ENCODE measurements at regions of chr19 and their contacts with region 1.

Region 1: DNA sequence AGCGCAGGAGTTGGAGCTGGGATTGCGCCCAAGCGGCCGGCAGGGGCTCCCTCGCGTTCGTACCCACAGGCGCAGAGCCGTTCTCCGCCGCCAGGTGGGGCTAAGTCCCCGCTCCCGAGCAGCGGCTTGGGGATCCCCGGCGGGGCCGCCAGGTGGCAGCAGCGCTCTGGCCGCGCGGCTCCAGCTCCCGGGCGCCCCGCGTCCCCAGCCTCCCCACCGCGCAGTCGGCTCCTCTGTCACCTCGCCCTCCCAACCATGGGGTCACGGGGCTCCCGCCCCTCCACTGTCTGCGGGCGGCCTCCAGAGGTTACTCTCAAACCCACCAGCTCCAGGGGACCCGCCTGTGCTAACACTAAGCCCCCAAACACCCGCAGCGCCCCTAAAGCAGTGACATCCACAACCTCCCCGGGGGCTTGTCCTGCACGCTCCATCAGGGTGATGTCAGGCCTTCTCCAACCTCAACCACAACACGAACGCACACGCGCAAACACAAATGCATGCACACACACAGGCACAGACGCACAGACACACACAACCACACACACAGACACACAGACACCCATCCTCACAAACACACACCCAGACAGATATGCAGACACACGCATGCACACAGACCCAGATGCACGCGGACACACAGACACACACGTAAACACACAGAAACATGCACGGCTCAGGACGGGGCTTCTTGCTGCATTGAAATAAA is 18.4 kb upstream of the KCTD15 start:
- DNase-seq: peak; percentile 85 to 96
- ATAC-seq: peak; percentile 61 to 85
- H3K4me3 ChIP-seq: peak overlapping the region; percentile 42
- H3K27ac ChIP-seq: peak overlapping the region in 1 of 2 experiments; percentile 42; a peak in 2 of 6 replicates
- H3K4me1 ChIP-seq: peaks cover 27% of the 10 kb centered on the region
- CTCF ChIP-seq: peak; percentile 100
- EP300 ChIP-seq: no peak
- POLR2A ChIP-seq: no peak
- RAD21 ChIP-seq: peak; percentile 100

Region 2: GRCh38 chr19:33438007-33438671 is 340.1 kb before region 1 on chr19:
- CTCF ChIA-PET with region 1: interaction called, 572 read pairs
- POLR2A ChIA-PET with region 1: no interaction called
- DNase-seq: peak in 1 of 2 experiments; percentile 48
- ATAC-seq: peak; percentile 27 to 72; a peak in 4 of 6 replicates
- H3K4me3 ChIP-seq: no peak overlapping the region
- H3K27ac ChIP-seq: no peak overlapping the region
- H3K4me1 ChIP-seq: no peaks in the 10 kb centered on the region
- CTCF ChIP-seq: no peak
- EP300 ChIP-seq: no peak
- POLR2A ChIP-seq: no peak
- RAD21 ChIP-seq: peak in 1 of 2 experiments; percentile 37; a peak in 3 of 5 replicates

Region 3: GRCh38 chr19:33804021-33804799 is 26.0 kb after region 1 on chr19:
- CTCF ChIA-PET with region 1: interaction called, 313 read pairs
- POLR2A ChIA-PET with region 1: interaction called, 4 read pairs
- DNase-seq: peak; percentile 96 to 99
- ATAC-seq: peak; percentile 76 to 86
- H3K4me3 ChIP-seq: no peak overlapping the region
- H3K27ac ChIP-seq: peak overlapping the region; percentile 88 to 90
- H3K4me1 ChIP-seq: peaks cover 77% of the 10 kb centered on the region
- CTCF ChIP-seq: no peak
- EP300 ChIP-seq: no peak
- POLR2A ChIP-seq: no peak
- RAD21 ChIP-seq: no peak

Region 4: GRCh38 chr19:33927789-33928457 is 149.7 kb after region 1 on chr19:
- CTCF ChIA-PET with region 1: interaction called, 25 read pairs
- POLR2A ChIA-PET with region 1: no interaction called
- DNase-seq: no peak
- ATAC-seq: no peak
- H3K4me3 ChIP-seq: no peak overlapping the region
- H3K27ac ChIP-seq: no peak overlapping the region
- H3K4me1 ChIP-seq: no peaks in the 10 kb centered on the region
- CTCF ChIP-seq: no peak
- EP300 ChIP-seq: no peak
- POLR2A ChIP-seq: no peak
- RAD21 ChIP-seq: no peak

Region 5: DNA sequence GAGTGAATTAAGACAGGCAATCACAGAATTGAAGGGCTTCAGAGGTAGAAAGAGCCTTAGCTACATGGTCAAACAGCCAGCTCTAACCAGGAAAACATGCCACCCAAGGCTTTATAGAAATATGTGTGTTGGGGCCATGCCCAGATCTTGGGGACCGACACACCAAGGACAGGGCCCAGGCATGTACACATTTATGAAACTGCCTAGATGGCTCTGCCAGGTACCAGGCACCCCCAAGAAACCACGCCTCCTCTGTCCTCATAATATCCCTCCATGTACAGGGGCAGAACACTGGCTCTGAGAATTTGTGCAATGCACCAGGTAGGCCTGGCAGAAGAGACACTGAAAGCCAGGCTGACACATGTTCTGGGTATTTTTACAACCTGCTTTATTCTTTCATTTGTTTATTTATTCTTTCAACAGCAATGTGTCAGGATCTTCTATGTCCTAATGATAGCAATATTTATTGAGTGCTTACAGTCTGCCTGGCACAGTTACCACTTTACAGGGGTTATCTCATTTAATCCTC is 256.1 kb after region 1 on chr19:
- CTCF ChIA-PET with region 1: interaction called, 15 read pairs
- POLR2A ChIA-PET with region 1: no interaction called
- DNase-seq: no peak
- ATAC-seq: peak; percentile 22 to 23; a peak in 2 of 6 replicates
- H3K4me3 ChIP-seq: no peak overlapping the region
- H3K27ac ChIP-seq: no peak overlapping the region
- H3K4me1 ChIP-seq: peaks cover 3% of the 10 kb centered on the region; the same call in 1 of the 3 replicates
- CTCF ChIP-seq: no peak
- EP300 ChIP-seq: no peak
- POLR2A ChIP-seq: no peak
- RAD21 ChIP-seq: no peak

Region 6: GRCh38 chr19:34109601-34110000 is 331.4 kb after region 1 on chr19:
- CTCF ChIA-PET with region 1: interaction called, 176 read pairs
- POLR2A ChIA-PET with region 1: no interaction called
- DNase-seq: no peak
- ATAC-seq: peak in 1 of 2 experiments; percentile 11; a peak in 1 of 6 replicates
- H3K4me3 ChIP-seq: no peak overlapping the region
- H3K27ac ChIP-seq: no peak overlapping the region
- H3K4me1 ChIP-seq: no peaks in the 10 kb centered on the region
- CTCF ChIP-seq: no peak
- EP300 ChIP-seq: no peak
- POLR2A ChIP-seq: no peak
- RAD21 ChIP-seq: no peak

Region 7: DNA sequence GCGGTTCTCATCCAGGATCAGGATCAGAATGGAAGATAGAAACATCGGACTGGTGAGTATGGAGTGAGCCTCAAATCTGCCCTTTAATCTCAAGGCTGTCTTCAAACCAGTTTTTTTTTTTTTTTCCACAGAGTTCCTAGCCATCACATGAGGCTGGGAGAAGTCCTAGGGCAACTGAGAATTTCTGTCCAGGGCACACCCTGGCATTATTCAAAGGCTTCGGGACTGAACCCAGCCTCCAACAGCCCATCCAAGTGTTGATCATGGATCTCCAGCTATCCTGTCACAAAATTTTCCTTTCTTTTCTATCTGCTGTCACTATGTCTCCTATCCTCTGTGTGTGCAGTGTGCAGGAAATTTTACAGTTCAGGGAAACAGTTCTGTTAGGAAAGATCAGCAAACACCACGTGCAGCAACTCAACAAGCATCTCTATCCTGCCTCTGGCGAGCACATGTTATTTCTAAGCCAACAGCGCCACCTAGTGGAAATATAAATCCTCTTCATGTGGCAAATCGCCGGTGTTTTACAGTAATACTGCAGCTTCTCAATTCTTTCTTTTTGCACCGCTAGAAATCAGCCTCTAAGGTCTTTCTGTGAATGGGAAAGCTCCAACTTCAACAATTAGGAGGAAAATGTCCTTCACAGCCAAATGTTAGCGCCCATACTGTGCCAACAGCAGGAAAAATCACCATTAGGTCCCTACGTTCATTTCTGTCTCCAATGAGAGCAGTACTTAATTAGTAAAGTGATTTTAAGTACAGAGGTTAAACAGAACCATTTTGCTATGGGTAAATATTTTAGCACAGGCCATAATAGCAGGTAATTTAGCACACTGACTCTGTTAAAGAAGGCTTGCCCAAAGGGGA is 934.4 kb after region 1 on chr19:
- CTCF ChIA-PET with region 1: interaction called, 42 read pairs
- POLR2A ChIA-PET with region 1: no interaction called
- DNase-seq: peak; percentile 77 to 90
- ATAC-seq: peak; percentile 75 to 95; a peak in 5 of 6 replicates
- H3K4me3 ChIP-seq: no peak overlapping the region
- H3K27ac ChIP-seq: no peak overlapping the region
- H3K4me1 ChIP-seq: no peaks in the 10 kb centered on the region
- CTCF ChIP-seq: peak; percentile 93
- EP300 ChIP-seq: no peak
- POLR2A ChIP-seq: no peak
- RAD21 ChIP-seq: peak; percentile 94 to 97